Common myeloid progenitor, CD34-positive (primary cell): ENCODE measurements at regions of chr19 and their contacts with region 1.

Region 1: DNA sequence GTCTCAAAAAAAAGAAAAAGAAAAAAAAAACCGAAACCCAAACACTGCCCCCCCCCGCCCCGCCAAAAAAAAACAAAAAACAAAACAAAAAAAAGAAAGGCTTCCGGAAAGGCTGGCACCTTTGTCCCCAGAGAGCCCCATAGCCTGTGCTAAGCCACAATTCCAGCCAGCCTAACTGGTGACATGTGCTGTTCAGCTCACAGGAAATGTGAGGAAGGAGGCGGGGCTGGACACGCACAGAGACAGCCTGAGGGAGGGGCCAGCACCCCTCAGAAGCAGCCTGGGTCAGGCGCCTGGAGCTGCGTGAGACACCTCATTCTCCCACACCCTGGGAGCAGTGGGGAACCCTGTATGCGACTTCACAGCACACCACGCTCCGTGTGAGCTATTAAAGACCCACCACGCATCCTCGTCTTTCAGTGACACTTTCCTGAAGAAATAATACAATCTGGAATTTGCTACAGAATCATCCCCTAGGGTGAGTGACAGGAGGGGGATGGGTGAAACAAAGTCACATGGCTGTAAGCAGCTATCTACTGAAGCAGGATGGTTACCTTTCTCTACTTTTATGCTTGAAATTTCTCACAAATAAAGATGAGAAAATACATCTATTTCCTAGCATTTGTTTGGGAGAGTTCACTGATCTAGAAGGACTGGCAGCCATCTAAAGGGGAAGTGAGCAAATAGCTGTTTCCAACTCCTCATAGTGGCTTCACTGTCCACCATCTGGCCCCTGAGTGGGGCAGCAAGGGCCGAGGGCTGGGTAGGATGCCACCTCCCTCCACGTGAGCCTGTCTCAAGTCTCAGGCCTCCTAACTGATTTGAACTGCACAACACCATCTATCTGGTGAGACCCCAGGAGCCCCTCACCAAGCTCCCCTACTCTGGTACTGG is 12.3 kb upstream of the SLC35E1 start:
- DNase-seq: peak; percentile 91 to 95 (median 95)
- H3K4me3 ChIP-seq: peak overlapping the region in 6 of 7 experiments; percentile 24 to 72 (median 52)
- H3K27ac ChIP-seq: peak overlapping the region; percentile 22 to 69
- H3K4me1 ChIP-seq: peaks cover 10 to 77% (median 74%) of the 10 kb centered on the region in 4 experiments
- H3K27me3 ChIP-seq: no peaks in the 10 kb centered on the region

Region 2: DNA sequence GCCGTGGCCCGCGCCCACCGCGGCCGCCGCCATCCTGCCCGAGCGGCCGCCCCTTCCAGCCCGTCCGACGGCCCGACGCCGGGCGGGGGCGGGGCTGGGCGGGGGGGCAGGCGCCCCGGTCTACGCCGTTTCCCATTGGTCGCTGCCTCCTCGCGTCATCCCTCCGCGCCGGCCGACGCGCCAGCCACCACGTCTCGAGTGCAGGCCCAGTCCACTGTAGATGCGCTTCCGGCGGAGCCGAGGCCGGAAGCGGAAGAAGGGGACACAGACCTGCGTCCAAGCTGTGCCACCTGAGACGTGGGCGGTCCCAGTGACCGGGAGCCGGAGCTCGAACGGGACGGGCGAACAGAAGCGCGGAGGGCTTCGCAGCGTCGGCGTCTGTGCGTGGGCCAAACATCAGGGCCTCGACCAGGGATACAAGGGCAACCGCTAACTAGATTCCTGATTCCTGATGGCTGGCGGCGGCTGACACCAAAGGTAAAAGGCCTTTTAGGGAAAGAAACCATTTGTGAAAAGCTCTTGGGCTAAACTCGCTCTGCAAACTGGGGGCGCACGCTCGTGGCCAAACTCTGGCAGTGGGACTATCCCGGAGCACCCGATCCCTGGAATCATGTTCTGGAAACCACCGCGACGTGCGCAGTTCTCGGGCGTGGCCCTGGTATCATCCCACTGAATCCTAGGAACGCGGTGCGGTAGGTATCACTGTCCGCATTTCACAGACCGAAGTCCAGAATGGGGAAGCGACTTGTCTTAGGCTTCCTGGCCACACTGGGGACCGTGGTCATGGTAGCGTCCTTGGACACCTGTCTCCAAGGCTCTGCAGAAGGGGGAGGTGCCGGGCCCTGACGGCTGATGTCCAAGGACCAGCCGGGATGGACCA is 11.9 kb before region 1 on chr19 and contains the start of gene SLC35E1:
- CTCF ChIA-PET with region 1: interaction called, 17 read pairs
- POLR2A ChIA-PET with region 1: interaction called, 16 read pairs
- DNase-seq: peak; percentile 92 to 95 (median 93)
- H3K4me3 ChIP-seq: peak within 1 kb of the TSS; percentile 79 to 98 (median 95)
- H3K27ac ChIP-seq: peak within 1 kb of the TSS; percentile 86 to 92
- H3K4me1 ChIP-seq: peaks cover 8 to 37% (median 24%) of the 10 kb centered on the region in 4 experiments
- H3K27me3 ChIP-seq: no peaks in the 10 kb centered on the region

Region 3: GRCh38 chr19:16612618-16613017 is 28.1 kb after region 1 on chr19:
- CTCF ChIA-PET with region 1: interaction called, 12 read pairs
- POLR2A ChIA-PET with region 1: no interaction called
- DNase-seq: no peak
- H3K4me3 ChIP-seq: peak overlapping the region in 1 of 7 experiments; percentile 1
- H3K27ac ChIP-seq: no peak overlapping the region
- H3K4me1 ChIP-seq: peaks cover 4 to 61% (median 13%) of the 10 kb centered on the region in 4 experiments
- H3K27me3 ChIP-seq: no peaks in the 10 kb centered on the region

Region 4: DNA sequence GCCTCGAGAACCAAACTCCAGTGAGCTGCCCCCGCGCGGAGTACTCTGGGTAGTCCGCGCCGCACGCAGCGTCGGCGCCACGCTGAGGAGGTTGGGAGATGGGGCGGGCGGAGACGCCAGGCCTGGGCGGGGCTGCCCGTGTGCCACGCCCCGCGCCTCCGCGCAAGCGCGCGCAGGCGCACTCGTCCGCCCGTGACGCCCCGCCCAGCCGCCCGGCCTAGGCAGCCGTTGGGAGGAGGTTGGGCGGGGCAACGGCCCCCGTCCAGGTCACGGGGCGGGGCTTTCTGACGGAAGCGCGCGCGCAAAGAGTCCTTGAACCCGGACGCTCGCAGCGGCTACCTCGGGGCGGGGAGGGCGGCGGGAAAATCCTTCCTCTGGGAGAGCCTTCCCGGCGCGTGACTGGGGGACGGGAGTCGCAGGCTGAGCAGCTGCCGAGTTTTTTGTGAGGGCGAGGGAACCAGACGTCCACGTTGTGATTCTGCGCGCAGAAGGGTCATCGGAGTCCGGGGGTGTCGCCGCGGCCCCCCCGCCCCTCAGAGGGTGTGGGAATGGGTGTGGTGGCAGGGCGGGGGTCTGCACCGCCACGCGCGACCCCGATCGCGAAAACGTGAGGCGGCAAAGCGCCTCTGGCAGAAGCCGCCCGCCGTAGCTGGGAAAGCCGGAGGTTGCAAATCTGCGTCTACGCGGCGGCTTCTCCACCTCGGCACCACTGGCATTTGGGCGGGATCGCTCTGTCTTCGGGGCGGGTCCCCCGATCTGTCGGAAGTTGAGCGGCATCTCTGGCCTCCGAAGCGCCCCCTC is 43.9 kb after region 1 on chr19 and contains the start of gene MED26:
- CTCF ChIA-PET with region 1: interaction called, 9 read pairs
- POLR2A ChIA-PET with region 1: interaction called, 14 read pairs
- DNase-seq: peak; percentile 91 to 95 (median 94)
- H3K4me3 ChIP-seq: peak within 1 kb of the TSS; percentile 82 to 99 (median 89)
- H3K27ac ChIP-seq: peak within 1 kb of the TSS; percentile 77 to 89
- H3K4me1 ChIP-seq: peaks cover 6 to 26% (median 21%) of the 10 kb centered on the region in 4 experiments
- H3K27me3 ChIP-seq: no peaks in the 10 kb centered on the region